Thyroid gland (tissue), 4 donors: ENCODE measurements at regions of chr12 and their contacts with region 1.

Region 1: GRCh38 chr12:43812906-43813305 is 6.8 kb upstream of the TWF1 start:
- DNase-seq: no peak
- H3K4me3 ChIP-seq: no peak overlapping the region
- H3K27ac ChIP-seq: no peak overlapping the region
- H3K4me1 ChIP-seq: no peaks in the 10 kb centered on the region
- H3K27me3 ChIP-seq: no peaks in the 10 kb centered on the region
- CTCF ChIP-seq: no peak
- POLR2A ChIP-seq: no peak

Region 2: GRCh38 chr12:43858096-43858495 is 45.2 kb after region 1 on chr12:
- intact Hi-C with region 1: no loop called
- DNase-seq: no peak
- H3K4me3 ChIP-seq: no peak overlapping the region
- H3K27ac ChIP-seq: no peak overlapping the region
- H3K4me1 ChIP-seq: no peaks in the 10 kb centered on the region
- H3K27me3 ChIP-seq: no peaks in the 10 kb centered on the region
- CTCF ChIP-seq: no peak
- POLR2A ChIP-seq: no peak

Region 3: DNA sequence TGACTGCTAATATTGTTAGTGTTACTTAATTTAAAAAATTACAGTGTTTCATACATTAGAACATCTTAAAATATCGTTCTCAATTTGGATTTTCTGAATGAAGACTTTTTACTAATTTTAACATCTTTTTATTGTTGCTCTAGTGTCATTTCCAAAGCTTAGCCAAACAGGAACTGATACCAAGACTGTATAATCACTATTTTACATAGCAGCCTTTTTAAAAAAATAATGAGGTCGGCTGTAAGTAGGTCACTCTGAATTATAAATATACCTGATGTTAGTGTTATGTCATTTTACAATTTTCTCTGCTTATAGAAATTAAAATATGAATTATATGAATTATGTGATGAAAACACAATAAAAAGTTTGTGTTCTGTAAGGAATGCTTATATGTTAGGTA is 344.5 kb after region 1 on chr12:
- intact Hi-C with region 1: no loop called
- DNase-seq: no peak
- H3K4me3 ChIP-seq: no peak overlapping the region
- H3K27ac ChIP-seq: no peak overlapping the region
- H3K4me1 ChIP-seq: no peaks in the 10 kb centered on the region
- H3K27me3 ChIP-seq: no peaks in the 10 kb centered on the region
- CTCF ChIP-seq: no peak
- POLR2A ChIP-seq: no peak

Region 4: GRCh38 chr12:44379831-44380230 is 566.9 kb after region 1 on chr12:
- intact Hi-C with region 1: loop called (anchors 10 kb)
- DNase-seq: peak in 1 of 2 donors; percentile 3
- H3K4me3 ChIP-seq: no peak overlapping the region
- H3K27ac ChIP-seq: no peak overlapping the region
- H3K4me1 ChIP-seq: no peaks in the 10 kb centered on the region
- H3K27me3 ChIP-seq: no peaks in the 10 kb centered on the region
- CTCF ChIP-seq: no peak
- POLR2A ChIP-seq: no peak

Region 5: GRCh38 chr12:44674875-44675274 is 862.0 kb after region 1 on chr12:
- intact Hi-C with region 1: no loop called
- DNase-seq: no peak
- H3K4me3 ChIP-seq: no peak overlapping the region
- H3K27ac ChIP-seq: no peak overlapping the region
- H3K4me1 ChIP-seq: no peaks in the 10 kb centered on the region
- H3K27me3 ChIP-seq: no peaks in the 10 kb centered on the region
- CTCF ChIP-seq: no peak
- POLR2A ChIP-seq: no peak